ENCODE measurements at regions of chr15 and their contacts with region 1.

Region 1: DNA sequence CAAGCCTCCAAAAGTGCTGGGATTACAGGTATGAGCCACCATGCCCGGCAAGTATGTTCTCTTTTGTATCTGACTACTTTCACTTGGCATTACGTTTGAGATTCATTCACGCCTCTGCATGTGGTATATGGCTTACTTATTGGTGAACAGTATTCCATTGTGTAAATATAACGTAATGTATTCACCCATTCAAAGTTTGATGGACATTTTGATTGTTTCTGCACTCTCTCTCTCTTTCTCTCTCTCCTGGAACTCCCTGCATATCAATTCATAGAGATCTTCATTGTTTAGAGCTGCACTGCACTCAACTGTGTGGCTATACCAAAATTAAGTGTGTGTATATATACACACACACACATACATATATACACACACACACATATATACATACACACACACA is 30.4 kb downstream of the SPPL2A start:
- DNase-seq: no peak
- ATAC-seq: no peak
- H3K4me3 ChIP-seq: no peak overlapping the region
- H3K27ac ChIP-seq: no peak overlapping the region
- H3K4me1 ChIP-seq: no peaks in the 10 kb centered on the region
- H3K27me3 ChIP-seq: no peaks in the 10 kb centered on the region
- CTCF ChIP-seq: no peak
- POLR2A ChIP-seq: no peak

Region 2: GRCh38 chr15:50605462-50605861 is 129.7 kb before region 1 on chr15:
- intact Hi-C with region 1: loop called in 1 of 10 experiments (anchors 10 kb)
- DNase-seq: no peak
- ATAC-seq: no peak
- H3K4me3 ChIP-seq: no peak overlapping the region
- H3K27ac ChIP-seq: no peak overlapping the region
- H3K4me1 ChIP-seq: no peaks in the 10 kb centered on the region
- H3K27me3 ChIP-seq: no peaks in the 10 kb centered on the region
- CTCF ChIP-seq: no peak
- POLR2A ChIP-seq: no peak